ENCODE measurements at regions of chr1 and their contacts with region 1.

Region 1: GRCh38 chr1:213507472-213508223 is 456.6 kb downstream of the RPS6KC1 start:
- DNase-seq: no peak
- ATAC-seq: no peak
- H3K4me3 ChIP-seq: no peak overlapping the region
- H3K27ac ChIP-seq: no peak overlapping the region
- H3K4me1 ChIP-seq: no peaks in the 10 kb centered on the region
- H3K27me3 ChIP-seq: no peaks in the 10 kb centered on the region

Region 2: GRCh38 chr1:213399695-213400094 is 108.0 kb before region 1 on chr1:
- intact Hi-C with region 1: loop called in 1 of 2 experiments (anchors 10 kb)
- DNase-seq: no peak
- ATAC-seq: no peak
- H3K4me3 ChIP-seq: no peak overlapping the region
- H3K27ac ChIP-seq: no peak overlapping the region
- H3K4me1 ChIP-seq: no peaks in the 10 kb centered on the region
- H3K27me3 ChIP-seq: peaks cover 0 to 1% of the 10 kb centered on the region in 2 donors